GM12878 (cell line): ENCODE measurements at regions of chr3 and their contacts with region 1.

Region 1: DNA sequence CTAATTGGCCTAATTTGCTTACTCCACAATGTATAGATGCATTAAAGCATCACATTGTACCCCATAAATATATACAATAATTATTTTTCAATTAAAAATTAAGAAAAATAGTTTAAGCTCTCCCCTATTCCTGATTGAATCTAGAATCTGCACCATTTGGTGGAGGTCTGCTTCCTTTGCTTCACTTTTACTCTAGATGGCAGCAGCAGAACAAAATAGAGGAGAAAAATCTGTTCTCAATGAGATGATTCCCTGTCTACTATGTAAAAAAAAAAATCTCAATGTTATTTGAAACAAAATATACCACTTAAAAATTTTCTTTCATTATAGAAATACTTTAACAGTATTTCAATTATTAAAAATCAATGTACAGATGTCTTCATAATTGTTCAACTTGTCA is 109.6 kb upstream of the FXR1 start:
- DNase-seq: no peak
- ATAC-seq: peak; percentile 55; the same call in 2 of the 3 replicates
- H3K4me3 ChIP-seq: no peak overlapping the region
- H3K27ac ChIP-seq: no peak overlapping the region
- H3K4me1 ChIP-seq: no peaks in the 10 kb centered on the region
- H3K27me3 ChIP-seq: no peaks in the 10 kb centered on the region
- CTCF ChIP-seq: peak; percentile 27 to 43 (median 40); a peak in 4 of 6 replicates
- EP300 ChIP-seq: no peak
- POLR2A ChIP-seq: no peak
- RAD21 ChIP-seq: peak; percentile 68

Region 2: DNA sequence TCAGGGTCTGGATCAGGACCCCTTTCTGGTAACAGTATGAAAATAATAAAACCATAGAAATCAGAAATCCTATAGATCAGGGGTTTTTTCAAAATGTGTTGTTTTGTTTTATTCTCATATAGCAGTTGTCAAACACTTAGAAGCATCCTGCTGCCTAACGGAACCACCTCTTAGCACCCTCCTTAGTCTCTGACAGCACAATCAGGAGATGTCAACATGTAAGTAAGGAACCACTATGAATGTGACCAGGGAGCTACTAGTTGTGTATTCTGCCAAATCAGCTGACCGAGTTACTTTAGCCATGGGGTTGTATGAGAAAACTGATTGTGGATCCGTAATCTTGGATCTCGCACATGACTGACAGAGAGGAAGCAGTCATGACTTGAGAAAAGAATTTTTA is 145.7 kb before region 1 on chr3:
- CTCF ChIA-PET with region 1: no interaction called
- POLR2A ChIA-PET with region 1: no interaction called
- RAD21 ChIA-PET with region 1: no interaction called
- SMC1A ChIA-PET with region 1: no interaction called
- in situ Hi-C with region 1: no loop called
- intact Hi-C with region 1: no loop called
- DNase-seq: no peak
- ATAC-seq: peak; percentile 31; the same call in 2 of the 3 replicates
- H3K4me3 ChIP-seq: no peak overlapping the region
- H3K27ac ChIP-seq: no peak overlapping the region
- H3K4me1 ChIP-seq: no peaks in the 10 kb centered on the region
- H3K27me3 ChIP-seq: no peaks in the 10 kb centered on the region
- CTCF ChIP-seq: no peak
- EP300 ChIP-seq: no peak
- POLR2A ChIP-seq: no peak
- RAD21 ChIP-seq: no peak

Region 3: DNA sequence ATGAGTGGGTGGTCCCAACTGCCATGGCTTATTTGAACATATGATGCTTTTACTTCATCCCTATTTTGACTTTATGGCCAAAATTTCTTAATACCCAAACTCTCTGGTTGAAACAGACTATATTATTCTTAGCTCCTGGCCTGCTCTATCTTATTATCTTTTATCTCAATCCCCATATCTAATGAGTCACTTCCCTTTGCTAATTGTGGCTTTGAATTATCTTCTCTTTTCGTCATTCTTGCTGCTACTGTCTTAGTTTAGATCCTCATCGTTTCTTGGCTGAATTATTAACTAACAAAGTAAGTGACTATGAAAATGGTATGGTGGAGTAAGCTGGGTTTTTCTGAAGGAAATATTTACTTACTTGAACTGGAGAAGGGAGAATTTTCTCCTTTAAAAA is 214.9 kb after region 1 on chr3:
- CTCF ChIA-PET with region 1: no interaction called
- POLR2A ChIA-PET with region 1: no interaction called
- RAD21 ChIA-PET with region 1: no interaction called
- SMC1A ChIA-PET with region 1: no interaction called
- in situ Hi-C with region 1: no loop called
- intact Hi-C with region 1: loop called (anchors 10 kb)
- DNase-seq: no peak
- ATAC-seq: no peak
- H3K4me3 ChIP-seq: no peak overlapping the region
- H3K27ac ChIP-seq: no peak overlapping the region
- H3K4me1 ChIP-seq: no peaks in the 10 kb centered on the region
- H3K27me3 ChIP-seq: no peaks in the 10 kb centered on the region
- CTCF ChIP-seq: no peak
- EP300 ChIP-seq: no peak
- POLR2A ChIP-seq: no peak
- RAD21 ChIP-seq: no peak

Region 4: GRCh38 chr3:181176601-181177000 is 373.8 kb after region 1 on chr3:
- CTCF ChIA-PET with region 1: interaction called, 4 read pairs
- POLR2A ChIA-PET with region 1: no interaction called
- RAD21 ChIA-PET with region 1: no interaction called
- SMC1A ChIA-PET with region 1: no interaction called
- in situ Hi-C with region 1: no loop called
- intact Hi-C with region 1: loop called (anchors 10 kb)
- DNase-seq: peak; percentile 7
- ATAC-seq: no peak; the same call in 2 of the 3 replicates
- H3K4me3 ChIP-seq: no peak overlapping the region
- H3K27ac ChIP-seq: no peak overlapping the region
- H3K4me1 ChIP-seq: no peaks in the 10 kb centered on the region
- H3K27me3 ChIP-seq: no peaks in the 10 kb centered on the region
- CTCF ChIP-seq: peak; percentile 46 to 55 (median 51)
- EP300 ChIP-seq: no peak
- POLR2A ChIP-seq: no peak
- RAD21 ChIP-seq: peak; percentile 55

Region 5: GRCh38 chr3:181278468-181279238 is 475.8 kb after region 1 on chr3:
- CTCF ChIA-PET with region 1: interaction called, 3 read pairs
- POLR2A ChIA-PET with region 1: no interaction called
- RAD21 ChIA-PET with region 1: no interaction called
- SMC1A ChIA-PET with region 1: no interaction called
- in situ Hi-C with region 1: no loop called
- intact Hi-C with region 1: loop called (anchors 5 kb)
- DNase-seq: no peak
- ATAC-seq: no peak; the same call in 2 of the 3 replicates
- H3K4me3 ChIP-seq: no peak overlapping the region
- H3K27ac ChIP-seq: no peak overlapping the region
- H3K4me1 ChIP-seq: no peaks in the 10 kb centered on the region
- H3K27me3 ChIP-seq: no peaks in the 10 kb centered on the region
- CTCF ChIP-seq: peak in 2 of 3 experiments; percentile 7 to 46; a peak in 4 of 6 replicates
- EP300 ChIP-seq: no peak
- POLR2A ChIP-seq: no peak
- RAD21 ChIP-seq: peak; percentile 52